ENCODE measurements at regions of chr3 and their contacts with region 1.

Region 1: GRCh38 chr3:141487521-141488252 is 860 bp downstream of the RASA2 start:
- DNase-seq: no peak
- H3K4me3 ChIP-seq: peak overlapping the region; percentile 77
- CTCF ChIP-seq: no peak

Region 2: GRCh38 chr3:141498598-141499223 is 11.0 kb after region 1 on chr3:
- CTCF ChIA-PET with region 1: interaction called, 11 read pairs
- POLR2A ChIA-PET with region 1: no interaction called
- DNase-seq: no peak
- H3K4me3 ChIP-seq: no peak overlapping the region
- CTCF ChIP-seq: no peak

Measured in AG04449 (cell line).